ENCODE measurements at regions of chr2 and their contacts with region 1.

Region 1: GRCh38 chr2:68441179-68441993 is 25.7 kb downstream of the FBXO48 start:
- DNase-seq: peak; percentile 97
- ATAC-seq: peak; percentile 98
- H3K4me3 ChIP-seq: peak overlapping the region in 1 of 5 experiments; percentile 45
- H3K4me3 Mint-ChIP-seq: peak overlapping the region; percentile 77
- H3K27ac ChIP-seq: peak overlapping the region; percentile 75 to 90
- H3K27ac Mint-ChIP-seq: peak overlapping the region; percentile 95
- H3K4me1 ChIP-seq: peaks cover 33 to 39% of the 10 kb centered on the region in 2 donors
- H3K4me1 Mint-ChIP-seq: peaks cover 46% of the 10 kb centered on the region
- H3K27me3 ChIP-seq: no peaks in the 10 kb centered on the region
- H3K27me3 Mint-ChIP-seq: no peaks in the 10 kb centered on the region
- CTCF ChIP-seq: peak; percentile 97

Region 2: GRCh38 chr2:68185541-68186164 is 255.7 kb before region 1 on chr2:
- CTCF ChIA-PET with region 1: interaction called, 10 read pairs
- POLR2A ChIA-PET with region 1: no interaction called
- intact Hi-C with region 1: no loop called
- DNase-seq: peak; percentile 76
- ATAC-seq: peak; percentile 61
- H3K4me3 ChIP-seq: no peak overlapping the region
- H3K4me3 Mint-ChIP-seq: no peak overlapping the region
- H3K27ac ChIP-seq: no peak overlapping the region
- H3K27ac Mint-ChIP-seq: no peak overlapping the region
- H3K4me1 ChIP-seq: peaks cover 0 to 5% of the 10 kb centered on the region in 2 donors
- H3K4me1 Mint-ChIP-seq: peaks cover 24% of the 10 kb centered on the region
- H3K27me3 ChIP-seq: no peaks in the 10 kb centered on the region
- H3K27me3 Mint-ChIP-seq: no peaks in the 10 kb centered on the region
- CTCF ChIP-seq: peak; percentile 93

Region 3: GRCh38 chr2:68251187-68251854 is 190.1 kb before region 1 on chr2:
- CTCF ChIA-PET with region 1: interaction called, 19 read pairs
- POLR2A ChIA-PET with region 1: no interaction called
- intact Hi-C with region 1: loop called (anchors 1 kb)
- DNase-seq: peak; percentile 92
- ATAC-seq: peak; percentile 60
- H3K4me3 ChIP-seq: peak overlapping the region; percentile 76 to 97 (median 96)
- H3K4me3 Mint-ChIP-seq: peak overlapping the region; percentile 90
- H3K27ac ChIP-seq: peak overlapping the region; percentile 86 to 92
- H3K27ac Mint-ChIP-seq: peak overlapping the region; percentile 93
- H3K4me1 ChIP-seq: peaks cover 39 to 55% of the 10 kb centered on the region in 2 donors
- H3K4me1 Mint-ChIP-seq: peaks cover 36% of the 10 kb centered on the region
- H3K27me3 ChIP-seq: no peaks in the 10 kb centered on the region
- H3K27me3 Mint-ChIP-seq: no peaks in the 10 kb centered on the region
- CTCF ChIP-seq: peak; percentile 77

Region 4: DNA sequence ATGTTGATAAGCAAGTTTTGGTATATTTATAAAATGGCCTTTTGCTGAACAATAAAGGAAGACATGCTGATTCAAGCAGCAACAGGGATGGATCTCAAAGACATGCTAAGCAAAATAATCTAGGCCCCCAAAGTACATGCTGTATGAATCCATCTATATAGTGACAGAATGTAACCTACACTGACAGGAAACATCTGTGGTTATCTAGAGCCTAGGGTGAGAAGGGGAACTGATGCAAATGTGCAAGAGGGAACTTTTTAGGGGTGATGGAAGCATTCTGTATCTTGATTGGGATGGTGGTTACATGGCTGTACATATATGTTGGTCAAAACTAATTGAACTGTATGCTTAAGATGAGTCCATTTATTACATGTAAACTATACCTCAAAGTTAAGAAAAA is 145.9 kb before region 1 on chr2:
- CTCF ChIA-PET with region 1: interaction called, 36 read pairs
- POLR2A ChIA-PET with region 1: no interaction called
- intact Hi-C with region 1: no loop called
- DNase-seq: peak; percentile 47
- ATAC-seq: no peak
- H3K4me3 ChIP-seq: no peak overlapping the region
- H3K4me3 Mint-ChIP-seq: no peak overlapping the region
- H3K27ac ChIP-seq: no peak overlapping the region
- H3K27ac Mint-ChIP-seq: no peak overlapping the region
- H3K4me1 ChIP-seq: peaks cover 11 to 12% of the 10 kb centered on the region in 2 donors
- H3K4me1 Mint-ChIP-seq: peaks cover 15% of the 10 kb centered on the region
- H3K27me3 ChIP-seq: no peaks in the 10 kb centered on the region
- H3K27me3 Mint-ChIP-seq: no peaks in the 10 kb centered on the region
- CTCF ChIP-seq: no peak

Region 5: DNA sequence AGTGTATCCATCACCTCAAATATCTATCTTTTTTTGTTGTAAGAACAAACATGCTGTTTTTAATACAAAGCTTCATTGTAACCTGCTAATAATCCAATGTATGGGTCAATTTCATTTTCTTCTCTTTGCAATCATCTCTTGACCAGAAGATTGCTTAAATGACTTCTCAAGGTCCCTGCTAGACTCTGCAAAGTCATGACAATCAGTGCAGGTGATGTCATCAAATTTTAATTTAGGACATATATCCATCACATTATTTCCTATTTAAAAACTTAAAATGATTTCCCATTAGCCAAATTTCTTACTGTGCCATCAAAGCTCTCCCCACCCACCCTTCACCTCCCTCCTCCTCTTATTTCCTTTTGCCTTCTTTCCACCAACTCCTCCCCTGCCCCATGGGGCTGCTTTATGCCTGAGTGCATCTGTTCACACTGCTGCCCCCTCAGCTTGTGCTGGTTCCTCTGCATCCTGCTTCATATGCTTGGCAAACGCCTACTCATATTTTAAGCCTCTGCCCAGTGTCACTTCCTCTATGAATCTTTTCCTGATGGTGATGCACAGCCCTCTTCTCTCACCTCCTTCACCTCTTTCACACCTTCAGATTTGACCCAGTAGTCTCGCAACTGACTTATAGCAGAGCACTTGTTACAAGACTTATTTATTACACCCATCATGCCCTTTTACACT is 56.0 kb before region 1 on chr2:
- CTCF ChIA-PET with region 1: interaction called, 22 read pairs
- POLR2A ChIA-PET with region 1: interaction called, 4 read pairs
- intact Hi-C with region 1: loop called (anchors 1 kb)
- DNase-seq: peak; percentile 81
- ATAC-seq: peak; percentile 73
- H3K4me3 ChIP-seq: no peak overlapping the region
- H3K4me3 Mint-ChIP-seq: peak overlapping the region; percentile 58
- H3K27ac ChIP-seq: peak overlapping the region; percentile 95 to 98
- H3K27ac Mint-ChIP-seq: peak overlapping the region; percentile 92
- H3K4me1 ChIP-seq: peaks cover 75 to 84% of the 10 kb centered on the region in 2 donors
- H3K4me1 Mint-ChIP-seq: peaks cover 88% of the 10 kb centered on the region
- H3K27me3 ChIP-seq: no peaks in the 10 kb centered on the region
- H3K27me3 Mint-ChIP-seq: no peaks in the 10 kb centered on the region
- CTCF ChIP-seq: no peak

Region 6: GRCh38 chr2:68411397-68412126 is 29.8 kb before region 1 on chr2:
- CTCF ChIA-PET with region 1: interaction called, 30 read pairs
- POLR2A ChIA-PET with region 1: interaction called, 7 read pairs
- intact Hi-C with region 1: loop called (anchors 1 kb)
- DNase-seq: peak; percentile 79
- ATAC-seq: peak; percentile 97
- H3K4me3 ChIP-seq: peak overlapping the region; percentile 24 to 60 (median 45)
- H3K4me3 Mint-ChIP-seq: peak overlapping the region; percentile 78
- H3K27ac ChIP-seq: peak overlapping the region; percentile 83 to 87
- H3K27ac Mint-ChIP-seq: peak overlapping the region; percentile 83
- H3K4me1 ChIP-seq: peaks cover 59 to 66% of the 10 kb centered on the region in 2 donors
- H3K4me1 Mint-ChIP-seq: peaks cover 91% of the 10 kb centered on the region
- H3K27me3 ChIP-seq: no peaks in the 10 kb centered on the region
- H3K27me3 Mint-ChIP-seq: no peaks in the 10 kb centered on the region
- CTCF ChIP-seq: no peak

Region 7: DNA sequence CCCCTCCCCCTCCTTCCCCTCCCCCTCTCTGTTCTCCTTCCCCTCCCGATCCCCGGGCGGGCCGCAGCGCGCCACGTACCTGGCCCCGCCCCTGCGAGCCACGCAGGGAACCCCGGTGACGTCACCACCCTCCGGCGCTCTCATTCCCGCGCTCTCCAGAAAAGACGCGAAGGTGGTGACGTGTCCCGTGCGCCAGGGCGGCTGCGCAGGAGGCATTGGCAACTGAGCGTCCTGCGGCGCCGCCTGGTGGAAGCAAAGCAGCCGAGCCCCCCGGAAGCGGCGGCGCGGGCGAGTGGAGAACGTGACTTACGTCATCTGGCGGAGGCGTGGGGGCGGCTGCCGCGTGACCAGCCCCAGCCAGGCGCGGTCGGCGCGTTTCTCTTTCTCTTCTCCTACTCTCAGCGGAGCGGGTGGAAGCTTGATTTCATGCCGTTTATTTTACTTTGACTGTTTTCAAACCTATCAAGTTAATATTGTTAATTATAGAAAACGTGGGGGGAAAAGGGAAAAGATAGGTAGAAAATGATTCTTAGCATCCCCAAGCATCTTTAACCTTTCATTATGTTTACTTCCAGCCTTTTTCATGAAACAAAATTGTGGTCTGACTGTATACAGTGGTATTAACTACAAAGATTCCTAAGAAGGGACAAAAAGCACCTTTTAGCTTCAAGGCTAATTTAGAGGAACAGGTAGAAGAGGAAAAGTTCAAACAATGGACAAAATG is 1701.4 kb after region 1 on chr2:
- CTCF ChIA-PET with region 1: no interaction called
- POLR2A ChIA-PET with region 1: no interaction called
- intact Hi-C with region 1: no loop called
- DNase-seq: peak; percentile 100
- ATAC-seq: peak; percentile 75
- H3K4me3 ChIP-seq: peak overlapping the region; percentile 61 to 91 (median 71)
- H3K4me3 Mint-ChIP-seq: peak overlapping the region; percentile 91
- H3K27ac ChIP-seq: peak overlapping the region; percentile 97 to 98
- H3K27ac Mint-ChIP-seq: peak overlapping the region; percentile 98
- H3K4me1 ChIP-seq: peaks cover 24 to 32% of the 10 kb centered on the region in 2 donors
- H3K4me1 Mint-ChIP-seq: peaks cover 50% of the 10 kb centered on the region
- H3K27me3 ChIP-seq: no peaks in the 10 kb centered on the region
- H3K27me3 Mint-ChIP-seq: no peaks in the 10 kb centered on the region
- CTCF ChIP-seq: peak; percentile 88

Measured in B cell (primary cell).